ENCODE measurements at regions of chr17 and their contacts with region 1.

Region 1: DNA sequence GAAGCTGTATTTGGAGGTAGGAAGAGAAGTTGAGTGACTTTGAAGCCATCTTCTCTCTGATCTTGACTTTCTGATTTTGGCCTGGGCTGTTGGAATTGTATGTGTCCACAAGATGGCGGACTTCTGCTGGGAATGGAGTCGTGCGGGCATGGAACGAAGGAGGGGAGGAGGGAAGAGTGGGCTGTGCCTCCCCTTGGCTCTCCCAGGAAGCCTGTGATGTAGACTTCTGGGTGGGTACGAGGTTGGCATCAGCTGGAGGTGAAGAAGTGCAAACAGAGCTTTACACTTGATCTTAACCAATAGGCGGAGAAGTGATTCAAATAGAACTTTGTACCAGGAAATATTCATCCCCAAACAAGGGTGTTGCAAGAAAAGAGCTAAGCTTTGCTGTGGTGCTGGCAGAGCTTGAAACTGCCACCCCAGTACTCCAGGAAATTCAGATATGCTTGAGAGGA is 7.4 kb upstream of the TMEM220 start:
- DNase-seq: peak; percentile 82
- H3K4me3 ChIP-seq: no peak overlapping the region
- H3K27ac ChIP-seq: no peak overlapping the region
- H3K4me1 ChIP-seq: peaks cover 0 to 16% of the 10 kb centered on the region in 2 experiments; a peak in 1 of 4 replicates
- H3K27me3 ChIP-seq: no peaks in the 10 kb centered on the region; the same call in 1 of the 2 replicates
- CTCF ChIP-seq: peak; percentile 79
- EP300 ChIP-seq: no peak
- RAD21 ChIP-seq: peak; percentile 96

Region 2: GRCh38 chr17:10646392-10646990 is 90.7 kb before region 1 on chr17:
- CTCF ChIA-PET with region 1: interaction called, 12 read pairs
- POLR2A ChIA-PET with region 1: no interaction called
- DNase-seq: peak; percentile 71
- H3K4me3 ChIP-seq: peak overlapping the region in 1 of 2 experiments; percentile 21; a peak in 1 of 4 replicates
- H3K27ac ChIP-seq: no peak overlapping the region
- H3K4me1 ChIP-seq: no peaks in the 10 kb centered on the region
- H3K27me3 ChIP-seq: no peaks in the 10 kb centered on the region
- CTCF ChIP-seq: peak; percentile 86
- EP300 ChIP-seq: no peak
- RAD21 ChIP-seq: peak; percentile 84

Region 3: GRCh38 chr17:10697092-10698081 is 39.8 kb before region 1 on chr17 and contains the starts of genes ADPRM and SCO1:
- CTCF ChIA-PET with region 1: interaction called, 10 read pairs
- POLR2A ChIA-PET with region 1: no interaction called
- DNase-seq: peak; percentile 95
- H3K4me3 ChIP-seq: peak within 1 kb of the TSS; percentile 76 to 99
- H3K27ac ChIP-seq: peak within 1 kb of the TSS; percentile 93 to 94
- H3K4me1 ChIP-seq: peaks cover 7 to 8% of the 10 kb centered on the region in 2 experiments; a peak in 3 of 4 replicates
- H3K27me3 ChIP-seq: no peaks in the 10 kb centered on the region
- CTCF ChIP-seq: peak; percentile 47
- EP300 ChIP-seq: no peak
- RAD21 ChIP-seq: no peak; the same call in 1 of the 2 replicates
- polyA plus RNA-seq, gene ADPRM: 7.6 and 10.8 TPM in 2 replicates
- polyA plus RNA-seq, gene SCO1: 28.6 and 32.7 TPM in 2 replicates

Region 4: GRCh38 chr17:10761281-10761680 is 24.1 kb after region 1 on chr17:
- CTCF ChIA-PET with region 1: interaction called, 12 read pairs
- POLR2A ChIA-PET with region 1: no interaction called
- DNase-seq: no peak
- H3K4me3 ChIP-seq: no peak overlapping the region
- H3K27ac ChIP-seq: no peak overlapping the region
- H3K4me1 ChIP-seq: peaks cover 0 to 15% of the 10 kb centered on the region in 2 experiments; a peak in 1 of 4 replicates
- H3K27me3 ChIP-seq: no peaks in the 10 kb centered on the region
- CTCF ChIP-seq: no peak
- EP300 ChIP-seq: no peak
- RAD21 ChIP-seq: no peak

Region 5: GRCh38 chr17:10836966-10837590 is 99.9 kb after region 1 on chr17:
- CTCF ChIA-PET with region 1: interaction called, 165 read pairs
- POLR2A ChIA-PET with region 1: no interaction called
- DNase-seq: no peak
- H3K4me3 ChIP-seq: no peak overlapping the region
- H3K27ac ChIP-seq: no peak overlapping the region
- H3K4me1 ChIP-seq: no peaks in the 10 kb centered on the region
- H3K27me3 ChIP-seq: no peaks in the 10 kb centered on the region
- CTCF ChIP-seq: no peak
- EP300 ChIP-seq: no peak
- RAD21 ChIP-seq: no peak

Region 6: GRCh38 chr17:10875979-10876555 is 138.9 kb after region 1 on chr17:
- CTCF ChIA-PET with region 1: interaction called, 20 read pairs
- POLR2A ChIA-PET with region 1: no interaction called
- DNase-seq: peak; percentile 58
- H3K4me3 ChIP-seq: no peak overlapping the region; a peak in 1 of 4 replicates
- H3K27ac ChIP-seq: no peak overlapping the region
- H3K4me1 ChIP-seq: no peaks in the 10 kb centered on the region
- H3K27me3 ChIP-seq: no peaks in the 10 kb centered on the region
- CTCF ChIP-seq: peak; percentile 55
- EP300 ChIP-seq: no peak
- RAD21 ChIP-seq: peak; percentile 77

Measured in SK-N-SH (cell line).